Common myeloid progenitor, CD34-positive (primary cell): ENCODE measurements at regions of chr4 and their contacts with region 1.

Region 1: DNA sequence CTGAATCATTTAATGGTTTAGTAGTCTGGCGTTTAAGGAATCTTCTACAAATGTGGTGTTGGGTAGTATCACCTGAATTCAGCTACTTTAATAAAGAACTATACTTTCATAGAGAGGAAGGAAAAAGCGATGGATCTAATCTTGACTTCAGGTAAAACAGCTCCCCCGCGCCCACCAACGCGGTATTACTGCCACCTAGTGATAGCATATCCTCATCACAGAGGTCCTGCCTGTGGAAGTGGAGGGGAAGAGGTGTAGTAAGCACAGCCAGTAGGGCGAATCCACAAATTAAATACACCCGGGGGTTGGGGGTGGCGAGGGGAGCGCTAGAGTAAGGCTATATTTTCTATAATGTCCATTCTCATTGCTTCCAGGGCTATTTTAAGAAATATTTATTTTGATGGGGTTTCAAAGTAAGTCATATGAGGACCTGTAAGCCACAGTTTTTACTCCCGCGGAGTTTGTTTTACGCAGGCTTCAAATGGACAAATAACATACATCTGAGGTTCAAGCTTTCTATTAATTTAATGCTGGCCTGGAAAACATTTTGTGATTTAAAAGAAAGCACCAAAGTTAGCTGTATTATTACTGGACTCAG is 8.3 kb upstream of the DAPP1 start:
- DNase-seq: peak; percentile 75 to 86 (median 84)
- H3K4me3 ChIP-seq: no peak overlapping the region
- H3K27ac ChIP-seq: no peak overlapping the region
- H3K4me1 ChIP-seq: peaks cover 0 to 2% (median 0%) of the 10 kb centered on the region in 4 experiments
- H3K27me3 ChIP-seq: peaks cover 0 to 4% (median 0%) of the 10 kb centered on the region in 5 experiments

Region 2: DNA sequence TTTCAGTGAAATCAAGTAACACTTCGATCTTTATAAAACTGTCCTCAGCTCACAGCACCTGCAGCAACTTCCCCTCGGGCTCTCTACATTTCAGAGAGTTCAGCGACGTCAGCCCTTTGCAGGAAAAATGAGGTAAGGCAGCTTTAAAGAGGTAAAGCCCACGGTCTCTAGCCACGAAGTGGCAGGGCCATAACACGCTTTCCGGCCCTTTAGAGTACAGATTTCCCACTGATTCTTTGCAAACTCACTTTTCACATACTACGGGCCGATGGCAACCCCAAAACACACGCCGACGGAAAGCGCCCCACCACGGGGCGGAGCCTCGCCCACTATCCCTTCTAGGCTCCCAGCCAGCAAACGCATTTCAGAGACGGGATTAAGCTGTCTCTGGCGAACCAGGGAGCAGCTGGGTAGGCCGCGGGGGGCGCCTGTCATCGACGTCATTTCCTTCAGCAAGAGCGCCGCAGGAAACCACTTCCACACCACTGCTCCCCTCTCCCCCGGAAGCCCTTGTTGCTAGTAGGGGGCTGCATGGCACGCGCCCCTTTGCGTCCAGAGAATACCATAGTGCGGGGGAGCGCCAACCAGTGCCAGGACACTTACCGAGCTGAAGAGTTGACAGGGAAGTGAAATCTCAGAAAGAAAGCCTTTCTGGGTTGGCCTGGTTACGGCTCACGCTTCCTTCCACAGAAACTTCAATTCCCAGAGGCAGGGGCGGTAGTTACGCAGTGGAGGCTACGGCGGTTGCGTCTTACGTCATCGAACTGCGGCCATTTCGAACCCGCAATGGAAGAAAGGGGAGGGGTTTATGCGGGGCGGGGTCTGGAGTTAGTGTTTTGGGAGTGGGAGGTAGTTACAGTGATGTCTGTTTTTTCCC is 244.8 kb before region 1 on chr4 and contains the start of gene TRMT10A:
- CTCF ChIA-PET with region 1: interaction called, 27 read pairs
- POLR2A ChIA-PET with region 1: interaction called, 3 read pairs
- DNase-seq: peak; percentile 99 to 100 (median 99)
- H3K4me3 ChIP-seq: peak within 1 kb of the TSS; percentile 69 to 95 (median 91)
- H3K27ac ChIP-seq: peak within 1 kb of the TSS; percentile 98 to 99
- H3K4me1 ChIP-seq: peaks cover 0 to 10% (median 8%) of the 10 kb centered on the region in 4 experiments
- H3K27me3 ChIP-seq: peaks cover 0 to 5% (median 3%) of the 10 kb centered on the region in 5 experiments

Region 3: DNA sequence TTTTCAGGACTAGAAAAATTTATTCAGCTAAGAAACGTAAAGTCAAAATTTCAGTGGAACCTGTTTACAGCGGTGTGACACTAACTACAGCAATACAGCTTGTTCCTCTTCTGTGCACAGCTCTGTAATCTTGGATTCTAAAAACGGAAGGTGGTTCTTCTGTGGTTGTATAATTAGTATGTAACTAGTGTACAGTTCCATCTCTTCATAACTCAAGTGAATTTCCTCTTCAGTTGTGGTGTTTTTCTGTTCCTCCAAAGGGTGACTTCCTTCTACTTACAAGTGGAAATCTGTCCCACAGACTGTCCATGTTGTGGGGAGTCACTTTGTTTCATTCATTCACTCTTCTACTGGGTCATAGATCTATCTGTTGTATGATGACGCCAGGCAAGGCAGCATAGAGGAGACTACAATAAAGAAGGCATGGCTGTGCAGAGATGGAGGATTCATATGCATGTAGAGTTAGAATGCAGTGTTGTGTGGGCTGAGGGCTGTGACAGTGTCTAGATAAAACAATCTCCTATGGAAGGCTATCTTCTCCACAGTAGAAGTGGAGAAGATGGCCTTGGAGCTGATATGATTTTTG is 13.7 kb after region 1 on chr4:
- CTCF ChIA-PET with region 1: interaction called, 15 read pairs
- POLR2A ChIA-PET with region 1: no interaction called
- DNase-seq: peak; percentile 45 to 89 (median 85)
- H3K4me3 ChIP-seq: peak overlapping the region in 4 of 7 experiments; percentile 3 to 43 (median 32)
- H3K27ac ChIP-seq: peak overlapping the region; percentile 1 to 30
- H3K4me1 ChIP-seq: peaks cover 38 to 53% (median 47%) of the 10 kb centered on the region in 4 experiments
- H3K27me3 ChIP-seq: no peaks in the 10 kb centered on the region

Region 4: DNA sequence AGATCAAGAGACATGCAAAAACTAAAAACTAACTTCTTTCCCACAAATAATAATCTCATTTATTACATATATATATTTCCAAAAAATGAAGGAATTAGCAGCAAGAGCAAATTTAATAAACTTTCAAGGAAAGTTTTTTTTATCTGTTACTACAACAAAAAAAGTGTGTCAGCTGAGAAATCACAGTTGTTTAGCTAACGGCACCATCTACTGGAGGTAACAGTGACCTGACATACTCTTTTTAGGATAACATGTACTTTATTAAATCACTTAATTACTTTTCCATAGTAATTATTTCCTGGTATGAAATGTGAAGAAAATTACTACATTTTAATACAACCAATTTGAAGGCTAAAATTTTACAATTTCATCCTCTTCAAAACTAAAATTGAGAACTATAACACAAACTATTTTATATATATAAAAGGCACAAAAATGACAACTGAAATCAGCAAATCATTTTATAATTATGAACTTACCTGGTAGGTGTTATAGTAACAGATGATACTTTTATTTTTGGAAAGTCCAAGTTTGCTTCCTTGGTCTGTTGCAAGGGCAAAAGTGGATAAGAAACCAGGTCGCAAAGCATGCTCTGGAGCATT is 76.8 kb after region 1 on chr4:
- CTCF ChIA-PET with region 1: interaction called, 20 read pairs
- POLR2A ChIA-PET with region 1: no interaction called
- DNase-seq: peak; percentile 76 to 89 (median 84)
- H3K4me3 ChIP-seq: no peak overlapping the region
- H3K27ac ChIP-seq: no peak overlapping the region
- H3K4me1 ChIP-seq: peaks cover 0 to 6% (median 0%) of the 10 kb centered on the region in 4 experiments
- H3K27me3 ChIP-seq: no peaks in the 10 kb centered on the region

Region 5: GRCh38 chr4:99927566-99927965 is 119.2 kb after region 1 on chr4:
- CTCF ChIA-PET with region 1: no interaction called
- POLR2A ChIA-PET with region 1: no interaction called
- DNase-seq: no peak
- H3K4me3 ChIP-seq: no peak overlapping the region
- H3K27ac ChIP-seq: no peak overlapping the region
- H3K4me1 ChIP-seq: peaks cover 0 to 5% (median 0%) of the 10 kb centered on the region in 4 experiments
- H3K27me3 ChIP-seq: no peaks in the 10 kb centered on the region

Region 6: DNA sequence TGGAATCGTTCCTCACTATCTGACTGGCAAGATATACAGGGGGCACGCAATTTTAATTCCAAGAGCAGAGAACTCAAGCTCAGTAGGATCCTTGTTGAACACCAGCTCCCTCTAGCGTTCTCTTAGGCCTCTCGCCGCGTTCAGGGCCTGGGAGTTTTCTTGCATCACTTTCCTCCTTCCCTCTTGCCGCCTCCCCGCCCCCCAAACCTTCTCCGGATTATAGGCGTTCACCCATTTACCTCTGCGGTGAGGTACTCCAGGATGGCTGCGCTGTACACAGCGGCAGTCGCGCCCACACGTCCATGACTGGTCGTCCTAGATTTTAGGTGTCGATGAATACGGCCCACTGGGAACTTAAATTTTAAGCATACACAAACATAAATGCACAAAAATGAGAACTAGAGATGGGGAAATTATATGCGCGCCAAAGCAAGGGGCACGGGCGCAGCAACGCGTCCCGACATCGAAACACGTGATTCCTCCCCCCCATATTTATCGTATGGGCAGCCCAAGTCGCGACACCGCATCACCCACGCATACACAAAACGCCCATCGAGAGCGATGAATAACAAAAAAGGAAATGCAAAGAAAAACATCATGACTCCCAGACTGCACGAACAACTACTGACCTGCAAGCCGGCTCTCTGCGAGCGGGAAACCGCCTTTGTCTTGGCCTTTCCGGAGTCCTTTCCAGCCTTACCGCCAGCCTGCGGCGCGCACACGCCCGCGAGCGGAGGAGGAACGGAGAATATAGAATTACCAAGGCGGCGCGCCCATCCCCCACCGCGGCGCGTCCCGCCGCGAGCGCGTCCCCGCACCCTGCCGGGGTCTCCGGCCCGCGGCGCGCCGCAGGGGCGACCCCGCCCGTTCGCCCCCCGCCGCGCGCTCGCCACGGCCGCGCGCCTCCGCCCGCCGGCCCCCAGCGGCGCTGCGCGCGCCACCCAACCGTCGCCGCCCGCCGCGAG is 141.0 kb after region 1 on chr4:
- CTCF ChIA-PET with region 1: interaction called, 10 read pairs
- POLR2A ChIA-PET with region 1: no interaction called
- DNase-seq: peak; percentile 95 to 97 (median 96)
- H3K4me3 ChIP-seq: peak overlapping the region; percentile 90 to 99 (median 97)
- H3K27ac ChIP-seq: peak overlapping the region; percentile 68 to 88
- H3K4me1 ChIP-seq: peaks cover 17 to 46% (median 30%) of the 10 kb centered on the region in 4 experiments
- H3K27me3 ChIP-seq: no peaks in the 10 kb centered on the region